PC-3 (cell line): ENCODE measurements at regions of chr14 and their contacts with region 1.

Region 1: GRCh38 chr14:21510735-21511657 is at the start of gene METTL3:
- DNase-seq: peak; percentile 98
- ATAC-seq: peak; percentile 98
- H3K4me3 ChIP-seq: peak within 1 kb of the TSS; percentile 96
- H3K27ac ChIP-seq: peak within 1 kb of the TSS; percentile 83
- H3K4me1 ChIP-seq: peaks cover 18% of the 10 kb centered on the region
- H3K27me3 ChIP-seq: no peaks in the 10 kb centered on the region
- CTCF ChIP-seq: no peak
- total RNA-seq, gene METTL3: 47.6 and 57.1 TPM in 2 replicates

Region 2: DNA sequence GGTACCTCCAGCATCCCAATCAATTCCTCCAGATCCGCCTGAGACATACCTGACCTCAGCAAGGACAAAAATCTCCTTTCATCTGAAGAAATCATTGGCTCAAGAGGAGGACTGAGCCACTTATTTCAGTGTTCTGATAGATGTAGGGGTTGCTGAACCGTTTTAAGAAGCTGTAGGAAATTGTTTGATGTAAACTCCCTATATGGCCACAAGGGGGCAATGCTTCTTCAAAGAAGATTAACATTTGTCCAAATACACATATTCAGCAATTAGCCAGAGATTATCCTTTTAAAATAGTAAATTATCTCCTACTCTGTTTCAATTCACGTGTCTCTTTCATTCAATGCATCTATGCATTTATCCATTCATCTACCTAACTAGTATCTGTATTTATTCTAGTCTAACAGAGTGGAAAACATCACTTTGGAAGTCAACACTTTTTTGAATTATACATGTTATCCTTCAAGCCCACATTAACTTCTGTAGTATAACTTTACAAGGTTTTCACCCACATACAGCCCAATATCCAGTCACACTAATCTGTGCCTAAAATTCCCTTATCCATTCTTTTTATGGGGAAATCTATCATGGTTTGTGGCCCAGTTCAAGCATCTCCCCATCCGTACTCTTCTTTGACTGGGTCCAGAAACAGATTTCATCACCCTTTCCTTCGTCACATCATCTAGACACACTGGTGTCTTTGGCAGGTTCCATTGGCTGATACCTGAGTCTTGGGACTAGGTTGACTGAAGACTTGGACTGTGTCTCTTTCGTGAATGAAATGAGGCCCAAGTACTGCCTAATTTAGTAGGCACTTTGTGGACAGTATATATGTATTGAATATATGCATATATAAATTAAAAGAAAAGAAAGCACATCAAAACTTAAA is 573.6 kb after region 1 on chr14:
- CTCF ChIA-PET with region 1: no interaction called
- POLR2A ChIA-PET with region 1: no interaction called
- intact Hi-C with region 1: no loop called
- DNase-seq: peak; percentile 81
- ATAC-seq: peak; percentile 53; the same call in 1 of the 2 replicates
- H3K4me3 ChIP-seq: no peak overlapping the region
- H3K27ac ChIP-seq: no peak overlapping the region
- H3K4me1 ChIP-seq: peaks cover 13% of the 10 kb centered on the region
- H3K27me3 ChIP-seq: peaks cover 26% of the 10 kb centered on the region
- CTCF ChIP-seq: peak; percentile 83

Region 3: GRCh38 chr14:22314181-22314820 is 803.3 kb after region 1 on chr14:
- CTCF ChIA-PET with region 1: no interaction called
- POLR2A ChIA-PET with region 1: interaction called, 10 read pairs
- intact Hi-C with region 1: no loop called
- DNase-seq: peak; percentile 88
- ATAC-seq: peak; percentile 52
- H3K4me3 ChIP-seq: no peak overlapping the region
- H3K27ac ChIP-seq: no peak overlapping the region
- H3K4me1 ChIP-seq: peaks cover 29% of the 10 kb centered on the region
- H3K27me3 ChIP-seq: no peaks in the 10 kb centered on the region
- CTCF ChIP-seq: peak; percentile 81